ENCODE measurements at regions of chr2 and their contacts with region 1.

Region 1: GRCh38 chr2:1675633-1676032 is 68.7 kb downstream of the PXDN start:
- DNase-seq: peak; percentile 87
- H3K4me3 ChIP-seq: no peak overlapping the region
- CTCF ChIP-seq: peak; percentile 89

Region 2: GRCh38 chr2:444937-445884 is 1230.4 kb before region 1 on chr2:
- CTCF ChIA-PET with region 1: no interaction called
- POLR2A ChIA-PET with region 1: no interaction called
- DNase-seq: no peak
- H3K4me3 ChIP-seq: no peak overlapping the region
- CTCF ChIP-seq: no peak

Region 3: GRCh38 chr2:1518867-1519530 is 156.6 kb before region 1 on chr2:
- CTCF ChIA-PET with region 1: no interaction called
- POLR2A ChIA-PET with region 1: no interaction called
- DNase-seq: no peak
- H3K4me3 ChIP-seq: no peak overlapping the region
- CTCF ChIP-seq: no peak

Region 4: DNA sequence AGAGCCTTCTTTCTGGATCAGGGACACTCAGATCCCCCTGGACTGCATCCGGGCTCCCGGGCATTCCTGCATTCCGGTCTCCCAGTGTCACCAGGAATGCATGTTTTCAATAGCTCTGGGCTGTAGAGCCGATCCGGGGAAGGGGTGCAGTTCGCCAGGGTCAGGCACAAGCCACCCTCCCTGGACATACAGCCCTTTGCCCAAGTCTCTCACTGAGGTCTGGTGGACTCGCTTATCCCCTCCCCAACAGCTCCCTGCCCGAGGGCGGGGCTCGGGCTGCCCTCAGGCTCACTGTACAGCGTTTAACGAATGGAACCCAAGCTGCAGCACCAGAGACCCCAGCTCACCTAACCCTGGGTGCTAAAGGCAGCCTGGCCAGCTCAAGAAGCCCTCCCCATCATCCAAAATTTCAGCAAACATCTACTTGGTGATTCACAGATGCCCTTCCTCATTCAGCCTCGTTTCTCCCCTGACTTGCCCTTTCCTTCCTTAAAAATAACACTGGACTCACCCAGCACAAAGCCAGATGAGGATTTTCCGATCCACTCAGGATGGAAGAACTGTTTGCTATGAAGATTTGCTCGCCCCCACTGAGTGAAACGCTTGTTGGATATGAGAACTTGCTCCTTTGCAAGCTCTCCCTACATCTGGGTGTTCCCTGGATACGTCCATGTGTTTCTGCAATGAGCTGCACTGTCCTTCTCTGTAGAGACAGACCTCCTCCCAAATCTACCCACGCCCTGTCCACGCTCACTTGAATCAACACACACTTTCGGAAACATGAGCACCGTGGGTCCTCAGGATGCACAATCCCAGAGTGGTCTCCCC is 10.5 kb after region 1 on chr2:
- CTCF ChIA-PET with region 1: interaction called, 11 read pairs
- POLR2A ChIA-PET with region 1: interaction called, 9 read pairs
- DNase-seq: no peak
- H3K4me3 ChIP-seq: no peak overlapping the region
- CTCF ChIP-seq: no peak

Region 5: DNA sequence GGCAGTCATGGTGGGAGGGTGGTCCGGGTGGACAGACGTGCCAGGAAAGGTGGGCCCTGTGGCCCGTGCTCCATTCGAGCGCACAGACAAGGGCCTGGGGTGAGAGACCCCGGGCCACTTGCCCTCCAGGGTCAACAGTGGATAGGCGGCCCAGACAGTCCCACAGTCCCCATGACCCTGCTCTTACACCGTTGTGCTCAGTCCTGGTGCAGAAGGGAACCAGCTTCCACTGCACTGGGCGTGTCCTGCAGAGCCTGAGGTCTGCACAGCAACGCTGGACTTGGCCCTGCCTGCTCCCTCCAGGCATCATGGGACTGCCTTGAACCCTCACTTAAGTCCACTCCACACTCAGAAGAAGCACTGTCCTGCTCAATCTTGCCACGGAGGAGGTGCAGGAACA is 16.7 kb after region 1 on chr2:
- CTCF ChIA-PET with region 1: interaction called, 11 read pairs
- POLR2A ChIA-PET with region 1: no interaction called
- DNase-seq: no peak
- H3K4me3 ChIP-seq: no peak overlapping the region
- CTCF ChIP-seq: no peak

Region 6: GRCh38 chr2:1742681-1743395 is 67.2 kb after region 1 on chr2:
- CTCF ChIA-PET with region 1: interaction called, 16 read pairs
- POLR2A ChIA-PET with region 1: interaction called, 4 read pairs
- DNase-seq: no peak
- H3K4me3 ChIP-seq: peak overlapping the region; percentile 75
- CTCF ChIP-seq: peak; percentile 71

Region 7: GRCh38 chr2:1854729-1855547 is 179.3 kb after region 1 on chr2:
- CTCF ChIA-PET with region 1: no interaction called
- POLR2A ChIA-PET with region 1: no interaction called
- DNase-seq: no peak
- H3K4me3 ChIP-seq: no peak overlapping the region
- CTCF ChIP-seq: peak; percentile 20